Calu3 (cell line): ENCODE measurements at regions of chr4 and their contacts with region 1.

Region 1: GRCh38 chr4:16289897-16290554 is 63.8 kb upstream of the TAPT1 start:
- DNase-seq: no peak
- H3K4me3 Mint-ChIP-seq: no peak overlapping the region
- H3K27ac Mint-ChIP-seq: no peak overlapping the region
- H3K4me1 Mint-ChIP-seq: no peaks in the 10 kb centered on the region
- H3K27me3 Mint-ChIP-seq: no peaks in the 10 kb centered on the region
- CTCF ChIP-seq: peak; percentile 31

Region 2: DNA sequence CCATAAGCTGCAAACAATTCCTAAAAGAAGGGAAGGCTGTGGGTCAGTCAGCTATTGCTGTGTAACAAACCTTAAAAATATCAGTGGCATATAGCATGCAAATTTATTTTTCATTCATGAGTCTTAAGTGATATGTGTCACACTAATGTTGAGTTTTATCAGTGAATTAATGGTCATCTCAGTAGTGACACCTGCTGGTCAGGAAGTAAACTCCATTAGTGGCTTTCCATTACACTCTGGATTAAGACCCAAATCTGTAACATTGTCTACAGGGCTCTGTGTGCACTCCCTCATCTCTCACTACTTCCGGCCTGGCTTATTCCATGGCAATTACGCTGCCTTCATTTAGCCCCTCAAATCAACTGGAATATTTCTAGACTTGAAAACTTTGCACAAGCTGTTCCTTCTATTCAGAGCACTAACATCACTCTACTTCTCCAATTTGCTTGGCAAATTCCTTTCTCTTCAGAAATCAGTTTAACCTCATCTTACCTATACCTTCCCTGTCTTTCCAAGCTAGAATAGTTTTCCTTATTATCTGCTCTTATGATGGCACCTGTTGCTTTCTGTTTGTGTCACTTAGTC is 153.6 kb after region 1 on chr4:
- CTCF ChIA-PET with region 1: no interaction called
- intact Hi-C with region 1: loop called (anchors 2 kb)
- DNase-seq: no peak
- H3K4me3 Mint-ChIP-seq: no peak overlapping the region
- H3K27ac Mint-ChIP-seq: no peak overlapping the region
- H3K4me1 Mint-ChIP-seq: peaks cover 9% of the 10 kb centered on the region
- H3K27me3 Mint-ChIP-seq: peaks cover 25% of the 10 kb centered on the region
- CTCF ChIP-seq: peak; percentile 40

Region 3: GRCh38 chr4:17468371-17469221 is 1178.6 kb after region 1 on chr4:
- CTCF ChIA-PET with region 1: no interaction called
- intact Hi-C with region 1: loop called (anchors 5 kb)
- DNase-seq: peak; percentile 4
- H3K4me3 Mint-ChIP-seq: no peak overlapping the region
- H3K27ac Mint-ChIP-seq: no peak overlapping the region
- H3K4me1 Mint-ChIP-seq: no peaks in the 10 kb centered on the region
- H3K27me3 Mint-ChIP-seq: no peaks in the 10 kb centered on the region
- CTCF ChIP-seq: no peak